Endothelial cell of umbilical vein (primary cell): ENCODE measurements at regions of chr1 and their contacts with region 1.

Region 1: DNA sequence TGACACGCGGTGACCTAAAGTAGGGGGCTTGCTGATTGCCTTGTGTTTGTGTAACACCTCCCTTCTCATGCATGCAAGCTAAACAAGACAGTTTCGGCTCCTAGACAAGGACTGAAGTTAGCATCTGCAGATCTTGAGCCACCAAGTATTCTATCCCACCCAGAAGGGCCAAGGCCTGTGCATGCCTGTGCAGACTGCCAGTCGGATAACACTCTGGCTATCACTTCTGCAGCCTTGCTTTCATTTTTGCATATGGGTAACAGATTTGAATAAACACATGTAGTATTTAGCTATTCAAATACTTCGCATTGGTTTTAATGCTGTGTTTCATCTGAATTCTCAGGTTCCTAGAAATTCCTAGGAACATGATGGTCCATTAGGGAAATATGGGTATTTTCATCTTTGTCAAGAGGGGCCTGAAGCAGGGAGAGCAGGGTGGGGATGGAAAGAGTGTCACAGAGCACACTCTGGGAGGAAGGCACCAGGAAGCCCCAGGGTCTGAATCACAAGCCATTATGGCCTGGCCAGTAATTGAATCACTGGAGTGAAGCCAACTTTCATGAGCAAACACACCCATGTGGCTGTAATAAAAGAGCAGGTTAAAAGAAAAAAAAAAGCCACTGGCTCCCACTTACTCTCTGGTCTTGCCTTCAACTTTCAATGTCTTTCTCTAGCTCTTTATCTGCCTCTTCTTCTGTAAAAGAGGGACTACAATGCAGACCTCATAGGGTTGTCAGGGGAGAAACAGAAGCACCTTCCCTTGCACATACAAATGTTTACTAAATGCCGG is 28.3 kb downstream of the GADD45A start:
- DNase-seq: peak; percentile 92
- H3K4me3 ChIP-seq: no peak overlapping the region
- H3K27ac ChIP-seq: peak overlapping the region; percentile 64
- H3K4me1 ChIP-seq: peaks cover 45% of the 10 kb centered on the region
- H3K27me3 ChIP-seq: no peaks in the 10 kb centered on the region
- CTCF ChIP-seq: no peak
- POLR2A ChIP-seq: no peak

Region 2: DNA sequence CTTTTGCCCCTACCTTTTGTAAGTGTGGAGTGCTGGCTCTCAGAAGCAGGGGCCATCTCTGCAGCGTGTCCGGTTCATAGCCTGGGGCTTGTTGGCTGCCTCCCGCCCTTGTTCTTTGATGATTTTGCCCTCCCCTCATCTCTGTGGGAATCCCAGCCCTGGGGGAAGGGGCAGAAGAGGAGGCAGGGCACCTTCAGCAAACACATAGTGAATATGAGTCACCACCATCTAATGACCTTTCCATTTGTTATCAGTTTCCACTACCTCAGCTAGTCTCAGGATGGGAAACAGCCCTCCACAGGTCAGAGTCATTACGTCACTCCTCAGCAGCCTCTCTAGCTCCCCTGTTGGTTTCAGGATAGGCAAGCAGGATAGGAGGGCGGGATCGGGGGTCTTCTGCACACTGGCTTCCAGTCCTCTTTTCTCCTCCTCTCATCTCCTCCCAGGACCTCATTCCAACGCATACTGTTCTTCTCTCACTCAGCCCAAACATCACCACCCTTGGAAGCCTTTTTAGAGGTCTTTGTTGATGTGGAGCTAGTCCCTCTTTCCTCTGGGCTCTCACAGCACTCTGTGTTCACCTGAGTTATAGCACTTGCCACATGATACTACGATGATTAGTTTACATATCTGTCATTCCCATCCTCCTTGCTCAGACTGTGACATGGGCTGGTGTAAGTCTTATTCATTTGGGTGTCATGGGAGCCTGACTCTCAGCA is 12.4 kb before region 1 on chr1:
- CTCF ChIA-PET with region 1: interaction called, 12 read pairs
- POLR2A ChIA-PET with region 1: no interaction called
- dilution Hi-C with region 1: no loop called
- intact Hi-C with region 1: no loop called
- DNase-seq: peak; percentile 88
- H3K4me3 ChIP-seq: no peak overlapping the region
- H3K27ac ChIP-seq: peak overlapping the region; percentile 38
- H3K4me1 ChIP-seq: peaks cover 6% of the 10 kb centered on the region
- H3K27me3 ChIP-seq: no peaks in the 10 kb centered on the region
- CTCF ChIP-seq: peak in 1 of 2 donors; percentile 50
- POLR2A ChIP-seq: no peak